B cell (primary cell): ENCODE measurements at regions of chr15 and their contacts with region 1.

Region 1: GRCh38 chr15:44066316-44066740 is 128.7 kb downstream of the FRMD5 start:
- DNase-seq: peak; percentile 71
- ATAC-seq: no peak
- H3K4me3 ChIP-seq: no peak overlapping the region
- H3K4me3 Mint-ChIP-seq: no peak overlapping the region
- H3K27ac ChIP-seq: no peak overlapping the region
- H3K27ac Mint-ChIP-seq: no peak overlapping the region
- H3K4me1 ChIP-seq: no peaks in the 10 kb centered on the region
- H3K4me1 Mint-ChIP-seq: peaks cover 2% of the 10 kb centered on the region
- H3K27me3 ChIP-seq: no peaks in the 10 kb centered on the region
- H3K27me3 Mint-ChIP-seq: peaks cover 18% of the 10 kb centered on the region
- CTCF ChIP-seq: peak; percentile 88

Region 2: DNA sequence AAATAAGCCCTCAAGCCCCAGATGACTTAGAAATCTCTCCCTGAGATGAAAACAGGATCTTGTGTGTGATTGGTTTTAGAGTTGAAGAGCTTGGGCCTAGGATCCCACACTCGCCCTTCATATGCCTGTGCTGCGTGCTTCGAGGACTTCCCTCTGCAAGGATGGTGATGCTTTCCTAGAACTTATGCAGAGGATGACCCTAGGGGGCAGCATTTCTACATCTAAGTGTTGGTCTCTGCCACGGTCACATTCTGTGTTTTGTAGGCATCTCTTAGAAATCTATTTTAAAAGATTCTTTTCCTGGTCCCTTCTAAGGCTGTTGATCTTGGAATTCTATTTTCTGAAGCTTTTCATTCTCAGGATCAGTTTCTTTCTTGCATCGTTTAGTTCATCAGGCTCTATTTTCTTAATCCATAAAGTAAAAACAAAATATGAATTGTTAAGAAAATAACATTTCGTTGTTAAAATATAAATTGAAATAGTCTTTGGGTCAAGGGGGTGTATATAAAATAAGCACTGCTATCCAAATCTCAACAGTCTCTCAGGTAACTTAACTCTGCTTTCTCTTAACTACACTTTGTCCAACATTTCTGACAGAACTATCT is 193.8 kb before region 1 on chr15:
- CTCF ChIA-PET with region 1: interaction called, 3 read pairs
- POLR2A ChIA-PET with region 1: no interaction called
- intact Hi-C with region 1: loop called (anchors 1 kb)
- DNase-seq: peak; percentile 41
- ATAC-seq: no peak
- H3K4me3 ChIP-seq: no peak overlapping the region
- H3K4me3 Mint-ChIP-seq: no peak overlapping the region
- H3K27ac ChIP-seq: no peak overlapping the region
- H3K27ac Mint-ChIP-seq: no peak overlapping the region
- H3K4me1 ChIP-seq: no peaks in the 10 kb centered on the region
- H3K4me1 Mint-ChIP-seq: no peaks in the 10 kb centered on the region
- H3K27me3 ChIP-seq: no peaks in the 10 kb centered on the region
- H3K27me3 Mint-ChIP-seq: no peaks in the 10 kb centered on the region
- CTCF ChIP-seq: peak; percentile 40

Region 3: GRCh38 chr15:43903864-43904290 is 162.5 kb before region 1 on chr15:
- CTCF ChIA-PET with region 1: interaction called, 36 read pairs
- POLR2A ChIA-PET with region 1: no interaction called
- intact Hi-C with region 1: loop called (anchors 1 kb)
- DNase-seq: peak; percentile 71
- ATAC-seq: peak; percentile 63
- H3K4me3 ChIP-seq: no peak overlapping the region
- H3K4me3 Mint-ChIP-seq: no peak overlapping the region
- H3K27ac ChIP-seq: no peak overlapping the region
- H3K27ac Mint-ChIP-seq: no peak overlapping the region
- H3K4me1 ChIP-seq: peaks cover 0 to 4% of the 10 kb centered on the region in 2 donors
- H3K4me1 Mint-ChIP-seq: peaks cover 5% of the 10 kb centered on the region
- H3K27me3 ChIP-seq: no peaks in the 10 kb centered on the region
- H3K27me3 Mint-ChIP-seq: no peaks in the 10 kb centered on the region
- CTCF ChIP-seq: peak; percentile 78